CD8-positive, alpha-beta T cell (primary cell): ENCODE measurements at regions of chr18 and their contacts with region 1.

Region 1: DNA sequence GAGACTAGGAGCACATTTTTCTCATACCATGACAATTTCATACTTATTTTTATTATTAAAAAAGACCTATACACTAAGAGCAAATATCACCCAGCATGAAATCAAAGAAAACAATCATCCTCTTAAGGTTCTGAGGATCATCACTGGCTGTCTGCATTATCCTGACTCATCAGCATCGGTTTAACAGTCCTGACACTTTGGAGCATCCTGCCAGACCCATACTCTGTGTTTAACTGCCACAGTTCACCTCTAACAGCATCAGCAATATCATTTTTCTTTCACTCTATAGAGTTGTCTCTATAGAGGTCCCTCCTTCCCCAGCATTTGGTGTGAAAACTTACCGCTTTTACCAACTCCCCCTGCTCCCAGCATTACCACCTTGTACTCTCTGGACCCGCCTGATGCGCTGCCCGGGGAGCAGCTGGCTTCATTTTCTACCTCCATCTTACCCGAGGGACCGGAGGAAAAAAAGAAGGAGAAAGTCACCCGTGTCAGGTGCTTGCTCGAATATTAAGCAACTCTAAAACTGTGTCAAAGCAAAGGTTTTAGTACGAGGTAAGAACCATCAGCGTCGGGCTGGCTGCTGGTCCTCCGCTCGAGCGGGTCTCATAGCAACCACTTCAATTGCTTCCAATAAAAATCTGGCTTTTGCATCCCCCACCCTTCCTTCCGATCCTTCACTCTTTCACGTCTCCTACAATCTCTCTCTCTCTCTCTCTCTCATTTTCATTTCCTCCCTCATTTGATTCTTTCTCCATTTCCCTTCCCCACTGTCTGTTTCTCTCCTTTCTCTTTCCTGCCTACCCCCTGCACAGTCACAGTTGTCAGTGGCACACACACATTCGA is at the start of gene RIT2:
- DNase-seq: no peak
- ATAC-seq: no peak
- H3K4me3 ChIP-seq: no peak within 1 kb of the TSS
- H3K4me3 Mint-ChIP-seq: no peak within 1 kb of the TSS
- H3K27ac ChIP-seq: no peak within 1 kb of the TSS
- H3K27ac Mint-ChIP-seq: no peak within 1 kb of the TSS
- H3K4me1 ChIP-seq: no peaks in the 10 kb centered on the region
- H3K4me1 Mint-ChIP-seq: no peaks in the 10 kb centered on the region
- H3K27me3 ChIP-seq: no peaks in the 10 kb centered on the region
- H3K27me3 Mint-ChIP-seq: no peaks in the 10 kb centered on the region
- CTCF ChIP-seq: no peak
- total RNA-seq, gene RIT2: not detected

Region 2: DNA sequence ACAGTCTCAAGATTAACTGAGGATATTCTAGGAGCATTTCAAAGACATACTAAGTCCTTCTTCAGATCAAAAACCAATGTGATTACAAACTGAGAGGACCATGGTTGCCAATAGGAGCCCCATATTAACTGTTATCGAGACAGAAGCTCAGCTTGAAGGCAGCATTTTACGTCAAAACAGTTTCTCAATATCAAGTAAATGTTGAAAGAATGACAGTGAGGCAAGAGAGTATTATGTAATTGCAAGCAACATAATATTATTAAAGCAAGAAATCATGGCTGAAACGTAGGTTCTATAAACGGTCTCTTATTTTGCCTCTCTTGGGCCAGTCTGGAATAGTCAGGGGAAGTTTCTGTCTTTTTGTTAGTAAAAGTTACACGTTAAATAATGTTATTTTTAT is 22.8 kb before region 1 on chr18:
- CTCF ChIA-PET with region 1: no interaction called
- POLR2A ChIA-PET with region 1: no interaction called
- intact Hi-C with region 1: loop called in 1 of 2 experiments (anchors 2 kb)
- DNase-seq: no peak
- ATAC-seq: no peak
- H3K4me3 ChIP-seq: no peak overlapping the region
- H3K4me3 Mint-ChIP-seq: no peak overlapping the region
- H3K27ac ChIP-seq: no peak overlapping the region
- H3K27ac Mint-ChIP-seq: no peak overlapping the region
- H3K4me1 ChIP-seq: no peaks in the 10 kb centered on the region
- H3K4me1 Mint-ChIP-seq: no peaks in the 10 kb centered on the region
- H3K27me3 ChIP-seq: no peaks in the 10 kb centered on the region
- H3K27me3 Mint-ChIP-seq: no peaks in the 10 kb centered on the region
- CTCF ChIP-seq: no peak

Region 3: DNA sequence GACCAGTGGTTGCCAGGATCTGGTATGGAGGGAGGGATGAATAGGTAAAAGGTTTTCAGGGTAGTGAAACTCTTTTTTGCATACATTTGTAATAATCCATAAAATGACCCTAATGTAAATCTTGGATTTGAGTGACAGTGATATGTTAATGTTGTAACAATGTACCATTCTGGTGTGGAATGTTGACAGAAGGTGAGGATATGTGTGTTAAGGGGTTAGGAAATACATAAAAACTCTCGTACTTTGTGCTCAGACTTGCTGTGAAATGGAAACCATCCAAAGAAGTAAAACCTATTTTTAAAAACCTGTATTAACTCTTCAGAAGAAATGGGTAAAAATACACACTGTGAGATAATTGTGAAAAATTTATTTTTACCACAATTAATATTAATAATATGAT is 95.8 kb after region 1 on chr18:
- CTCF ChIA-PET with region 1: no interaction called
- POLR2A ChIA-PET with region 1: no interaction called
- intact Hi-C with region 1: no loop called
- DNase-seq: no peak
- ATAC-seq: no peak
- H3K4me3 ChIP-seq: no peak overlapping the region
- H3K4me3 Mint-ChIP-seq: no peak overlapping the region
- H3K27ac ChIP-seq: no peak overlapping the region
- H3K27ac Mint-ChIP-seq: no peak overlapping the region
- H3K4me1 ChIP-seq: no peaks in the 10 kb centered on the region
- H3K4me1 Mint-ChIP-seq: no peaks in the 10 kb centered on the region
- H3K27me3 ChIP-seq: no peaks in the 10 kb centered on the region
- H3K27me3 Mint-ChIP-seq: no peaks in the 10 kb centered on the region
- CTCF ChIP-seq: no peak